PC-3 (cell line): ENCODE measurements at regions of chr17 and their contacts with region 1.

Region 1: DNA sequence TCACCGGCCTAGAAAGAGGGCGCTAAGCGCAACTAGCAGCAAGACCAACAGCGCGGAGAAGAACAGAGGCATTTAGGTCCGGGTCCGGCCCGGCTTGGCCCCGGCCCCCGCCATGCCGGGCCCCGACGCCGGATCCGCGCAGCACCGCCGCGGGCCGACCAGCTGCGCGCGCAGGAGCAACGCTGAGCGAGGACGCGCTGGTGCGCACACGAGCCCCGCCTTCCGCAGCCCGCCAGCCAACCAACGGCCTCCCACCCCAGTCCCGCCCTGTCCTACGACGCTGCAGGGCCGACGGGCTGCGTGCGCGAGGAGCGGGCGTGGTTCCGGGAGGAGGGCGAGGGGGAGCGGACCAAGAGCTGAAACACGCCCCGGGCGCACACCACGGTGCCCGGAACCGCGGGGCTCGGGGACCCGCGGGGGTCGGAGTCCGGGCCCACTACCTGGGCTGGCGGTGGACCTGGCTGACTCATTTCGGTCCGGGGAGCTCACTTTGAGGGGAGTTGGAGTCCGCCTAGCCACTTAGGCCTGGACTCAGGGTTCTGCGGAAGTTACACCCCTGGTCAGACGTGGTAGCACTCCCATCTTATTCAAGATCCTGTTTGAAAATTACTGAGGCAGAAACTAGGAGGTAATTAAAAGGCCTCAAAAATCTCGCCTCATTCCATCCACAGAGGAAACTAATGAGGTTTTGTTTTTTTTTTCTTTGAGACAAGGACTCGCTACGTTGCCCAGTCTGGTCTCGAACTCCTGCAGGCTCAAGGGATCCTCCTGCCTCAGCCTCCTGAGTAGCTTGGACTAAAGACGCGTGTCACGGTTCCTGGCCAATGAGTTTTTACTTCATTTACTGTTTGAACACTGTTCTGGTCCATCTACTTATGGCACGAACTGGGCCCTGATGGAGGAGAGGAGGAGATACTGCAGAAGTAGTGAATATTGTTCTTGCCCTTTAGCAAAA is at the start of gene BLTP2:
- DNase-seq: peak; percentile 90
- ATAC-seq: peak; percentile 98
- H3K4me3 ChIP-seq: peak within 1 kb of the TSS; percentile 80
- H3K27ac ChIP-seq: peak within 1 kb of the TSS; percentile 25; the same call in 1 of the 2 replicates
- H3K4me1 ChIP-seq: peaks cover 13% of the 10 kb centered on the region
- H3K27me3 ChIP-seq: no peaks in the 10 kb centered on the region
- CTCF ChIP-seq: no peak
- total RNA-seq, gene BLTP2: 103 and 171 TPM in 2 replicates

Region 2: DNA sequence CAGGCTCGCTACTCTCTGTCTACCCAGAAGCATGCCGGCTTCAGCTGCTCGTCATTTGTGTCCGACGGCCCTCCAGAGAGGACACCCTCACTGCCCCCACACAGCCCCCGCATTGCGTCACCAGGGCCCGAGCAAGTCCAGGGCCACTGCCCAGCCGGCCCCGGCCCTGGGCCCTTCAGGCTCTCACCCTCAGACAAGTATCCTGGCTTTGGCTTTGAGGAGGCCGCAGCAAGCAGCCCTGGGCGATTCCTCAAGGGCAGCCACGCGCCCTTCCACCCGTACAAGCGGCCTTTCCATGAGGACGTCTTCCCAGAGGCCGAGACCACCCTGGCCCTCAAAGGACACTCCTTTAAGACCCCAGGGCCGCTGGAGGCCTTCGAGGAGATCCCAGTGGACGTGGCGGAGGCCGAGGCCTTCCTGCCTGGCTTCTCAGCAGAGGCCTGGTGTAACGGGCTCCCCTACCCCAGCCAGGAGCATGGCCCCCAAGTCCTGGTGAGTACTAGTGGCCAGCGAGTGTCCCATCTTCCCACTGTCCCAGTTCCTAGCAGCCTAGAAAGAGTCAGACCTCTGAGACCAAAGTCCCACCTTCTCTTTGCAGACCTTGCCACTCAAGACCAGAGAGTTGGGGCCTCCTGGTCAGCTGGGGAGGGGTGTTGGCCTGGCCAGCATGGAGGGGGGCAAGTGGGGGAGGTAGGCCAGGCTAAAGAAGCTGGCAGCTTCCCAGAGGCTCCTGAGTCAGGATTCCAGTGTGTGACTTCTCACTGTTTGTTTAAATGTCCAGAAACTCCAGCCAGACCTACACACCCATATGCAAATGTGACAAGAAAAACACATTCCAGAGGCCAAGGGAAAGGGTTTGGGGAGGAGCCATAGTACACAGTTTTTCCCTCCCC is 120.5 kb before region 1 on chr17:
- CTCF ChIA-PET with region 1: no interaction called
- POLR2A ChIA-PET with region 1: no interaction called
- intact Hi-C with region 1: no loop called
- DNase-seq: peak; percentile 79
- ATAC-seq: peak; percentile 85
- H3K4me3 ChIP-seq: no peak overlapping the region
- H3K27ac ChIP-seq: no peak overlapping the region
- H3K4me1 ChIP-seq: peaks cover 26% of the 10 kb centered on the region
- H3K27me3 ChIP-seq: no peaks in the 10 kb centered on the region
- CTCF ChIP-seq: no peak

Region 3: GRCh38 chr17:28661635-28662537 is 16.6 kb after region 1 on chr17 and contains the starts of genes SDF2 and SUPT6H:
- CTCF ChIA-PET with region 1: interaction called, 8 read pairs
- POLR2A ChIA-PET with region 1: interaction called, 4 read pairs
- intact Hi-C with region 1: loop called (anchors 1 kb)
- DNase-seq: peak; percentile 78
- ATAC-seq: peak; percentile 84
- H3K4me3 ChIP-seq: peak within 1 kb of the TSS; percentile 96
- H3K27ac ChIP-seq: peak within 1 kb of the TSS; percentile 87
- H3K4me1 ChIP-seq: peaks cover 16% of the 10 kb centered on the region
- H3K27me3 ChIP-seq: no peaks in the 10 kb centered on the region
- CTCF ChIP-seq: no peak
- total RNA-seq, gene SDF2: 31.6 and 34.0 TPM in 2 replicates
- total RNA-seq, gene SUPT6H: 32.2 and 38.8 TPM in 2 replicates

Region 4: GRCh38 chr17:28675980-28676379 is 30.7 kb after region 1 on chr17:
- CTCF ChIA-PET with region 1: no interaction called
- POLR2A ChIA-PET with region 1: no interaction called
- intact Hi-C with region 1: loop called (anchors 1 kb)
- DNase-seq: peak; percentile 39
- ATAC-seq: peak; percentile 65
- H3K4me3 ChIP-seq: no peak overlapping the region
- H3K27ac ChIP-seq: no peak overlapping the region
- H3K4me1 ChIP-seq: no peaks in the 10 kb centered on the region
- H3K27me3 ChIP-seq: no peaks in the 10 kb centered on the region
- CTCF ChIP-seq: peak; percentile 72

Region 5: DNA sequence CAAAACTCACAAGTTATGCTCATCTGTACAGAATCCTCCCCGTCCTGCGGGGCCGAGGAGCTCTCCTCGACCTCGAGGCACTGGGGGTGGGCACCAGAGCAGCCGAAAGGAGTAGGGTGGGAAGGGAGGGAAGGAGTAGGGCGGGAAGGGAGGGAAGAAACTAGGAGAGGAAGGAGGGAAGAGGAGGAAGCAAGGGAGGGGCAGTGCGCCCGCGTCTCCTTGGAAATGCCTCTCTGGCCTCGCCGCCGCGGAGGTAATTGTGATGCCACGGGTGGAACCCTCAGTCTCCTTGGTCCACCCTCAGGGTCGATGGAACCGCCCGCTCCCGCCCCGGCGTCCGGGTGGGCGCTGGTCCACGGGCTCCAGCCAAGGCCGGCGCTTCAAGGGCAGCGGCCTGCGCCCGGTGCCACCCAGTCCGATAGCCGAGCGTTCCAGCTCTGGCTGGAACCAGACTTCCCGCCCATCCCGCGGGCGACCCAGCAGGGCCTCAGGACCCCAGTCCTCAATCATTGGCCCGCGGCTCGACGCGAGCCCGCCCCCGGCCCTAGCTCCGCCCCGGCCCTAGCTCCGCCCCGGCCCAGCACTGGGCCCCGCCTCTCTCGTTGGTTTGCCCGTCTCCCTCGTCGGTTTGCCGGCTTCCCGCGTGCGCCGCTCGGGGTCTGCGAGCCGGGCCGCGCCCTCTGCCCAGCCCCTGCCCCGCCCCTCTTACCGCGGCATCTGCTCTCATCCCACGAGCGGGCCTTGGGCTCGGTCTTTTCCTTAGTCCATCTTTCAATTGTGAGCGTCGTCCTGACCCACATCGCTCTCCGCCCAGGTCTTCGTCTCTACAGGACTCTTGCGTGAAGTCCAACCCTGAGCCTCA is 65.8 kb after region 1 on chr17:
- CTCF ChIA-PET with region 1: interaction called, 8 read pairs
- POLR2A ChIA-PET with region 1: no interaction called
- intact Hi-C with region 1: loop called (anchors 10 kb)
- DNase-seq: peak; percentile 87
- ATAC-seq: peak; percentile 96
- H3K4me3 ChIP-seq: peak overlapping the region; percentile 74
- H3K27ac ChIP-seq: peak overlapping the region; percentile 70
- H3K4me1 ChIP-seq: peaks cover 4% of the 10 kb centered on the region; the same call in 1 of the 2 replicates
- H3K27me3 ChIP-seq: no peaks in the 10 kb centered on the region
- CTCF ChIP-seq: no peak